GM13977 (cell line): ENCODE measurements at regions of chr4 and their contacts with region 1.

Region 1: GRCh38 chr4:185304944-185305690 is 90.6 kb downstream of the LRP2BP start:
- DNase-seq: no peak
- CTCF ChIP-seq: peak; percentile 65

Region 2: GRCh38 chr4:184688447-184688846 is 616.7 kb before region 1 on chr4:
- in situ Hi-C with region 1: no loop called
- DNase-seq: no peak
- CTCF ChIP-seq: no peak

Region 3: DNA sequence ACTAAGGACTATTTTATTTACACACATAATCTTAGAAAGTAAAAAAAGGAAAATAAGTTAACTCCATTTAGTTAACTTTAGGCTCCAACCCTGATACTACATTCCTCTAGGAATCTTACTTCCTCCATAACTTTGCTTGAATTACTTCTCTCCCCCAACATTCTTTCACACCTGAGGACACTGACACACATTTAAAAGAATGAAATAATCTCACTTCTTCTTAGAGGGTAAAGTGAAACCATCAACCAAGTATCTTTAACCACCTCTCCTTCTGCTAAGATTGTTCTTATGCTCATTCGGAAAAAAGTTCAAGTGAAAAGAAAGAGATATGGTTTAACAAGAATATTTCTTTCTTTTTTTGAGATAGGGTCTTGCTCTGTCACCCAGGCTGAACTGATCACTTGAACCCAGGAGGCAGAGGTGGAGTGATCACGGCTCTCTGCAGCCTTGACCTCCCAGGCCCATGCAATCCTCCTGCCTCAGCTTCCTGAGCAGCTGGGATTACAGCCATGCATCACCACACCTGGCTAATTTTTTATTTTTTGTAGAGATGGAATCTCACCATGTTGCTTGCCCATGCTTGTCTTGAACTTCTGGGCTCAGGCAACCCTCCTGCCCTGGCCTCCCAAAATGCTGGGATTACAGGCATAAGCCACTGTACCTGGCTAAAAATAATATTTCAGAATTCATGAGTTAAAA is 133.6 kb before region 1 on chr4:
- in situ Hi-C with region 1: no loop called
- DNase-seq: no peak
- CTCF ChIP-seq: no peak

Region 4: GRCh38 chr4:185210102-185210981 is 94.8 kb before region 1 on chr4:
- in situ Hi-C with region 1: loop called (anchors 10 kb)
- DNase-seq: no peak
- CTCF ChIP-seq: no peak